T-cell (primary cell): ENCODE measurements at regions of chr1 and their contacts with region 1.

Region 1: DNA sequence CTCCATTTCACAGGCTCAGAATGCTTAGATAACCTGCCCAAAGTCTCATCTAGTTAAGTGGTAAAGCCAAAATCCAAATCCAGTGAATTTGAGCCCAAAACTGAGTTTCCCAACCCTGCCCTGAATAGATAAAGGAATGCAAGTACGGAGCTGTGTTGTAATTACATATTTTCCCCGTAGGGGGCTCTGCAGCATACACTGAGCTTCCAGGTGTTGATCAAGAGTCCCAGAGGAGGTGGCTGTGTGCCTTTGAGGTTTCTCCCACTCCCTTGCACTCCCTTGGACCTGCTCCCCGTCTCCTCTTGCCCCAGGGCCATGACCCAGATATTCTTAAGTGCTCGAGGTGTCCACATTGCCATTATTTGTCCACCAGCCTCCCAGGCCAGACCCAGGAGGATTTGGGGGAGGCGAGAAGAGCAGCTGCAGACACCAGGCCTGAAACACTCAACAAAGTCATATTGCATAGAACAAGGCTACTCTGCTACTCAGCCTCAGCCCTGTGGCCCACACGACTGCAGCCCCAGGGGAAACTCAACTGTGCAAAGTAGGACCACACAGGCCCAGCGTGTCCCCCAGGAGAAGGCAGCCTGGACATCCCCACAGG is 18.4 kb upstream of the LY9 start:
- DNase-seq: peak in 23 of 35 experiments; percentile 17 to 80 (median 38)
- ATAC-seq: peak; percentile 72 to 80 (median 75)
- H3K4me3 ChIP-seq: no peak overlapping the region
- H3K4me3 Mint-ChIP-seq: no peak overlapping the region
- H3K27ac ChIP-seq: no peak overlapping the region
- H3K27ac Mint-ChIP-seq: peak overlapping the region in 1 of 2 donors; percentile 56
- H3K4me1 ChIP-seq: peaks cover 0 to 21% of the 10 kb centered on the region in 2 experiments
- H3K4me1 Mint-ChIP-seq: peaks cover 25 to 33% (median 28%) of the 10 kb centered on the region in 3 donors
- H3K27me3 ChIP-seq: peaks cover 0 to 7% of the 10 kb centered on the region in 2 experiments
- H3K27me3 Mint-ChIP-seq: peaks cover 0 to 4% of the 10 kb centered on the region in 2 donors

Region 2: DNA sequence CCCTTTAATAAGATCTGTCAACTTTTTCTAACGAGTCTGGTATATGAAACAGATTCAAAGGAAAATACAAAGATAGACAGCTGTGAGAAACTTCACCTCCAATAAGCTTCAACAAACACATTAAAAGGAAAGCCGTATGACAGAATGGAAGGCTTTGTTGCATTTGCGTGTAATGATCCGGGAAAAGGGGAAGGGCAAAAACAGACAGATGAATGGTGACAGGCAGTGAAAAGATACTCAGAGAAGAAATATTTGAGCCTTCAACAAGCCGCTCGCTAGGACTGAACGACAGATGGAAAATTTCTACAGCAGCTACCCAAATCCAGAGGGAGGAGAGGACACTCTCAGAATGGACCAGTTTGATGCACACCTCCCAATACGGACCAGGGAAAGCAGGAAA is 449.4 kb before region 1 on chr1:
- CTCF ChIA-PET with region 1: no interaction called
- POLR2A ChIA-PET with region 1: no interaction called
- DNase-seq: no peak
- ATAC-seq: no peak
- H3K4me3 ChIP-seq: no peak overlapping the region
- H3K4me3 Mint-ChIP-seq: no peak overlapping the region
- H3K27ac ChIP-seq: no peak overlapping the region
- H3K27ac Mint-ChIP-seq: no peak overlapping the region
- H3K4me1 ChIP-seq: no peaks in the 10 kb centered on the region
- H3K4me1 Mint-ChIP-seq: peaks cover 2 to 14% (median 6%) of the 10 kb centered on the region in 3 donors
- H3K27me3 ChIP-seq: no peaks in the 10 kb centered on the region
- H3K27me3 Mint-ChIP-seq: no peaks in the 10 kb centered on the region

Region 3: DNA sequence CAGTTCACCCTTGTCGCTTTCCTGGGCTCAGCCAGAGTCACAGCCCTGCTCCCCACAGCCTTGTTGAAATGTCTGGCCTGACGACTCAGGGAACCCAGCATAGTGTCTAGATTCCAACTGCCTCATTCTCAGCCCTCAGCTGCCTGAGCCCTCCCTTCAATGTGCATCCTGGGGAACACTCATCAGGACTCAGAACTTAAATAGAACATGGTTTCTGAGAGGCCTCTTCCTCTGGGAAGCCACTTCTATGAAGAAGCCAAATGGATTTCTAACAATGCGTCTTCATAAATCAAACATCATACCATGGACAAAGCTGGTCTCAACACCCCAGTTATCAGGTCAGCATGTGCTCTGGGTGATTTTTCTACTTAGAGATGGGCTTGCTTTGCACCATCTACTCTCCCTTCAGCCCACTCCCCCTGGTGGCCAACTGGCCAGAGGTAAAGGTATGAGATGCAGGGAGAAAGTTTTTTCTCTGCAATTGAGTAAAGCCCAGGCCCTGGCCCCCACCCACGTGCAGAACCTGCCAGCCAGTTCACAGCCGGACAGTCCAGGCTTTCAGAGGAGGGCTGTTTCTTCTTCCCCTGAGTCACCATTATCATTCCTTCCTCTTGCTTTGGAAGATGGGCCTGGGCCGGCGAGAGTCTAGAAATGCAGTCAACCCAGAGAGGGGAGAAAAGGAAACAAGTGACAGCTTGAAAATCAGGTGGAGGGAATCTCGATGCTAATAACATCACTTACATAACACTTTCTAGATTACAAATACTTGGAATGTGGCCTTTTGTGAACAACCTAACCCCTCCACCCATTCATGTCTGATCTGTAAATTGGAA is 52.9 kb after region 1 on chr1:
- CTCF ChIA-PET with region 1: interaction called, 3 to 11 read pairs
- POLR2A ChIA-PET with region 1: no interaction called
- DNase-seq: peak; percentile 48 to 83 (median 74)
- ATAC-seq: peak; percentile 72 to 81 (median 76)
- H3K4me3 ChIP-seq: no peak overlapping the region
- H3K4me3 Mint-ChIP-seq: no peak overlapping the region
- H3K27ac ChIP-seq: peak overlapping the region; percentile 8
- H3K27ac Mint-ChIP-seq: peak overlapping the region; percentile 53 to 87
- H3K4me1 ChIP-seq: peaks cover 16 to 21% of the 10 kb centered on the region in 2 experiments
- H3K4me1 Mint-ChIP-seq: peaks cover 27 to 42% (median 33%) of the 10 kb centered on the region in 3 donors
- H3K27me3 ChIP-seq: no peaks in the 10 kb centered on the region
- H3K27me3 Mint-ChIP-seq: no peaks in the 10 kb centered on the region